ENCODE measurements at regions of chr7 and their contacts with region 1.

Region 1: GRCh38 chr7:92588561-92588960 is 1.6 kb downstream of the FAM133B start:
- DNase-seq: peak; percentile 49
- ATAC-seq: no peak
- H3K4me3 Mint-ChIP-seq: peak overlapping the region; percentile 88
- H3K27ac Mint-ChIP-seq: peak overlapping the region; percentile 97
- H3K4me1 Mint-ChIP-seq: peaks cover 52% of the 10 kb centered on the region
- H3K27me3 Mint-ChIP-seq: peaks cover 3% of the 10 kb centered on the region

Region 2: GRCh38 chr7:92602352-92603088 is 14.0 kb after region 1 on chr7:
- CTCF ChIA-PET with region 1: interaction called, 46 read pairs
- DNase-seq: no peak
- ATAC-seq: no peak
- H3K4me3 Mint-ChIP-seq: no peak overlapping the region
- H3K27ac Mint-ChIP-seq: no peak overlapping the region
- H3K4me1 Mint-ChIP-seq: peaks cover 4% of the 10 kb centered on the region
- H3K27me3 Mint-ChIP-seq: no peaks in the 10 kb centered on the region